Cardiac septum (tissue), 1 donor: ENCODE measurements at regions of chr1 and their contacts with region 1.

Region 1: GRCh38 chr1:152001391-152002249 is 8.0 kb upstream of the S100A10 start:
- DNase-seq: no peak

Region 2: DNA sequence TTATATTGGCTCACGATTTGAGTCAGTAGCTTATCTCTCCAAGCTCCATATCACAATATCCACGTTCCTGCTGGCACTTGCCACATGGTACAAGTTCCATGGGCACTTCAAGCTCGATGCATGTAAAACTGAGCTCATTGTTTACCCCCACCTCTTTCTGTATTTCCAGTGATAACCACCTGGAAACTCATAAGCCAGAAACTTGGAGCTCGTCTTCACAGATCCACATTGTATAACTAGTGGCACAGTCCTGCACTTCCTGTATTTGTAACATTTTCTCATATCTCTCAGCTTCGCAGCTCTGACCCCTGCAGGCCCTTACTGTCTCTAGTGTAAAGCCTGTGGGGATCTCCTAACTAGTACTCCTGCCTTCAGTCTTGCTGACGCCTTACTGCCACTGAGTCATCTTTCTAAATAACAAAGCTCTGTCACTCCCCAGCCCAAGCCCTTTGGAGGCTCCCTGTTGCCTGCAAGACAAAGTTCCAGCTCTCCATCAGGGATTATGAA is 155.5 kb before region 1 on chr1:
- intact Hi-C with region 1: no loop called
- DNase-seq: peak; percentile 33

Region 3: DNA sequence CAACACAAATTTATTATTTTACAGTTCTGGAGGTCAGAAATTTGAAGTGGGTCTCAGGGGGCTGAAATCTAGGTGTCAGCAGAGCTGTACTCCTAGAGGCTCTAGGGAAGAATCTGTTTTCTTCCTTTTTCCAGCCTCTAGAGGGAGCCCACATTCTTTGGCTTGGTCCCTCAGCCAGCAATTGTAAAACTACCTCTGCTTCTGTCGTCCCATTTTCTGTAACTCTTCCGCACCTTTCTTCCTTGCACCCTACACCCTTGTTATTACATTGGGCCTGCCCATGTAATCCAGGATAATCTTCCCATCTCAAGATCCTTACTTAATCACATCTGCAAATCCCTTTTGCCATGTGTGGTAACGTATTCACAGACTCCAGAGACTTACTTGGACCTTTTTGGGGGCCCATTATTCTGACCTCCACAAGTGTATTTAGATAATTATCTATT is 67.5 kb before region 1 on chr1:
- intact Hi-C with region 1: loop called (anchors 1 kb)
- DNase-seq: no peak

Region 4: DNA sequence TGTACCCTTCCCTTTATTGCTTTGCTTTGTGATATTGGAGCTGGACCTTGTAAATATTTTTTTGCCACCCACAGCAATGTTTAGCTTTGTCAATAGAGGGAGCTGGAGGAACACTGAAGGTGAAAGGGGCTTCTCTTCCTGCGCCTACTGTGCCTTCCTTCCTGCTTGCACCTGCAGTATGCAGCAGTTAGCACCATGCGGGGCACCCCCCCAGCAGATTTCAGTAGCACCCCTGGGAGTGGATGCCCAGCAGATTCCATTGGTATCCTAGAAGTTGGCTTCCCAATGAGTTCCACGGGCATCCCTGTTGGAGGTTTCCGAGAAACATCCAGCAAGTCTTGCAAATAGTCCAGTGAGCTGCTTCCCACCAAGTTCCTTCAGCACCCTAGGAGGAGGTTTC is 33.6 kb before region 1 on chr1:
- intact Hi-C with region 1: loop called (anchors 5 kb)
- DNase-seq: no peak